ENCODE measurements at regions of chr2 and their contacts with region 1.

Region 1: DNA sequence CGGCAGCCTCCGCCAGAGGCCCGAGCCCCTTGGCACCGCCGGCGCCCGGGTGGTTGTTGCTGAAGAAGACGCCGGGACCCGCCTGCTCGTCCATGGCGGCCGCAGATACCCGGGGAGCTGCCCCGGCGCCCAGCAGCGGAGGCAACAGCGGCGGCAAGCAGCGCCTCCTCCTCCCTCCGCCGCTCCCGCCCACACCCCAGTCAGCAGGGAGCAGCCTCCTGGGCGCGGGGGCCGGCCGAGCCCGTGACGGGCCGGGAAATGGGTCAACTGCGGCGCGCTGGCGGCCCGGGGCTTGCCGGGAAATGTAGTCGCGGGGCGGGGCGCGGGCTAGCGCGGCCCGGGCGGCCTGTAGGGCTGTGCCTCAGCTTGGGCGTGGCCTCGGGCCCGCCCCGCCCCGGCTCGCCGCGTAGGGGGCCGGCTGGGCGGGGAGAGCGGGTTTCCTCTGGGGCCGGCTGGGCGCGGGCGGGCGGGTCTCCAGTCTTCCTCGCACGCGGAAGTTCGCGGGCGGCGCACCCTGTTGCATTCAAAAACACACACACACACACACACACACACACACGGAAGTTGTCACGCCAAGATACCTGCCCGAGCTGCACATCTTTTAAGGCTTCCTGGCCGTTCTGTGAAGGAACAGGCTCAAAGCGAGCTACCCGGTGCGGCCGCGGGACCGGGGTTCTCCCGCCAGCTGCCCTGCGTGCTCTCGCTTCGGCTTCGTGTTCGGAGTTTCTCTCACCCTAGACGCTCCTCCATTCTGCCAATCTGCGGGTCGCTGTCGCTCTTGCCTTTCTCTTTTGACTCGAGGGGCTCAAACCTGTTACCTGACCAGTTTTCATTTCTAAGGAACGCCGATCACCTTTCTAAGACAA is at the start of gene STRN:
- DNase-seq: peak; percentile 99
- ATAC-seq: peak; percentile 91
- H3K4me3 ChIP-seq: peak within 1 kb of the TSS; percentile 66 to 91 (median 79)
- H3K4me3 Mint-ChIP-seq: peak within 1 kb of the TSS; percentile 99
- H3K27ac ChIP-seq: peak within 1 kb of the TSS; percentile 72 to 89
- H3K27ac Mint-ChIP-seq: peak within 1 kb of the TSS; percentile 94
- H3K4me1 ChIP-seq: peaks cover 21 to 23% of the 10 kb centered on the region in 2 donors
- H3K4me1 Mint-ChIP-seq: peaks cover 33% of the 10 kb centered on the region
- H3K27me3 ChIP-seq: no peaks in the 10 kb centered on the region
- H3K27me3 Mint-ChIP-seq: no peaks in the 10 kb centered on the region
- CTCF ChIP-seq: no peak
- total RNA-seq, gene STRN: 38.6 and 42.8 TPM in 2 replicates

Region 2: GRCh38 chr2:36780231-36780839 is 186.3 kb before region 1 on chr2:
- CTCF ChIA-PET with region 1: no interaction called
- POLR2A ChIA-PET with region 1: no interaction called
- intact Hi-C with region 1: no loop called
- DNase-seq: peak; percentile 59
- ATAC-seq: no peak
- H3K4me3 ChIP-seq: no peak overlapping the region
- H3K4me3 Mint-ChIP-seq: no peak overlapping the region
- H3K27ac ChIP-seq: no peak overlapping the region
- H3K27ac Mint-ChIP-seq: no peak overlapping the region
- H3K4me1 ChIP-seq: peaks cover 0 to 3% of the 10 kb centered on the region in 2 donors
- H3K4me1 Mint-ChIP-seq: peaks cover 2% of the 10 kb centered on the region
- H3K27me3 ChIP-seq: peaks cover 0 to 2% (median 0%) of the 10 kb centered on the region in 4 experiments
- H3K27me3 Mint-ChIP-seq: peaks cover 15% of the 10 kb centered on the region
- CTCF ChIP-seq: peak; percentile 95

Region 3: GRCh38 chr2:37013315-37013641 is 46.7 kb after region 1 on chr2:
- CTCF ChIA-PET with region 1: no interaction called
- POLR2A ChIA-PET with region 1: interaction called, 7 read pairs
- intact Hi-C with region 1: loop called (anchors 1 kb)
- DNase-seq: no peak
- ATAC-seq: peak; percentile 9
- H3K4me3 ChIP-seq: no peak overlapping the region
- H3K4me3 Mint-ChIP-seq: no peak overlapping the region
- H3K27ac ChIP-seq: peak overlapping the region; percentile 43 to 86
- H3K27ac Mint-ChIP-seq: peak overlapping the region; percentile 78
- H3K4me1 ChIP-seq: peaks cover 36 to 41% of the 10 kb centered on the region in 2 donors
- H3K4me1 Mint-ChIP-seq: peaks cover 30% of the 10 kb centered on the region
- H3K27me3 ChIP-seq: no peaks in the 10 kb centered on the region
- H3K27me3 Mint-ChIP-seq: no peaks in the 10 kb centered on the region
- CTCF ChIP-seq: no peak

Region 4: DNA sequence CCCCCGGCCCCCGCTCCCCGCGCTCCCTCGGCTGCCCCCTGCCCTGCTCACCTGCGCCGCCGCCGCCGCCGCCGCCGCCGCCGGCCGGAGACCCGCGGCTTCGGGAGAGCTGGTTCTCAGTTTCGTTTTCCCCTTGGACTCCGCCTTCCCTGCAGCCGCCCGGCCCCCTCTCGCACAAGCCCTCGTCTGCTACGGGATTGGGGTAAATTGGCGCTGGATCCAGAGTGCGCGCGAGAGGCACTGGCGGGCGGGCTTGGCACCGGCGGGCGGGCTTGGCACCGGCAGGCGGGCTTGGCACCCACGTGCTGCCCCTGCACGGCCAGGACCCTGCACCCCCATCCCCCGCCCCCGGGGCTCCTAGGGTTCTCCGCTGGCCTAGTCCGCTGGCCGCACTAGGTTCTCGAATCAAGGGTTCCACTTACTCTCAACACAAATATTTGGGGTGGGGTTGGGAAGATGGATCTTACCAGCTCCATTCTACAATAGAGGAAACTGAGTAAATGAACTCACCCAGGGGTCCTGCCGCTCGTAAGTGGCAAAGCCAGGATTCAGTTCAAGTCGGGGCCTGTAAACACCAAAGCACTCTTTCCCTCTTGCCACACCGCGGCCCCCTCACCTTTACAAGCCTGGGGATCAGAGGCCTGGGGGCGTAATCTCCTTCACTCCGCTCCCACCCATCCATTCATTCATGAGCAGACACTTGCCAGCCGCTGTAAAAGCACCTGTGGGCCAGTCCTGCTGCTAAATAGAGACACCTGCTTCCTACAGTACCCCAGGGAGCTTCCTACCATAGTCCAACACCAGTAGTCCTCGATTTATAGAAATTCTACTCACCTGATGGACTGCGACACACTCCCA is 190.5 kb after region 1 on chr2 and contains the start of gene EIF2AK2:
- CTCF ChIA-PET with region 1: no interaction called
- POLR2A ChIA-PET with region 1: interaction called, 3 read pairs
- intact Hi-C with region 1: loop called (anchors 1 kb)
- DNase-seq: peak; percentile 86
- ATAC-seq: peak; percentile 92
- H3K4me3 ChIP-seq: peak within 1 kb of the TSS; percentile 78 to 93 (median 80)
- H3K4me3 Mint-ChIP-seq: peak within 1 kb of the TSS; percentile 96
- H3K27ac ChIP-seq: peak within 1 kb of the TSS; percentile 58 to 72
- H3K27ac Mint-ChIP-seq: peak within 1 kb of the TSS; percentile 93
- H3K4me1 ChIP-seq: peaks cover 26 to 30% of the 10 kb centered on the region in 2 donors
- H3K4me1 Mint-ChIP-seq: peaks cover 40% of the 10 kb centered on the region
- H3K27me3 ChIP-seq: no peaks in the 10 kb centered on the region
- H3K27me3 Mint-ChIP-seq: no peaks in the 10 kb centered on the region
- CTCF ChIP-seq: no peak
- total RNA-seq, gene EIF2AK2: 36.2 and 36.9 TPM in 2 replicates

Region 5: GRCh38 chr2:37231241-37232130 is 264.9 kb after region 1 on chr2 and contains the starts of genes CEBPZ and NDUFAF7:
- CTCF ChIA-PET with region 1: no interaction called
- POLR2A ChIA-PET with region 1: no interaction called
- intact Hi-C with region 1: loop called (anchors 5 kb)
- DNase-seq: peak; percentile 90
- ATAC-seq: peak; percentile 92
- H3K4me3 ChIP-seq: peak within 1 kb of the TSS; percentile 76 to 95 (median 91)
- H3K4me3 Mint-ChIP-seq: no peak within 1 kb of the TSS
- H3K27ac ChIP-seq: peak within 1 kb of the TSS; percentile 85 to 90
- H3K27ac Mint-ChIP-seq: no peak within 1 kb of the TSS
- H3K4me1 ChIP-seq: peaks cover 26 to 28% of the 10 kb centered on the region in 2 donors
- H3K4me1 Mint-ChIP-seq: peaks cover 18% of the 10 kb centered on the region
- H3K27me3 ChIP-seq: no peaks in the 10 kb centered on the region
- H3K27me3 Mint-ChIP-seq: no peaks in the 10 kb centered on the region
- CTCF ChIP-seq: no peak
- total RNA-seq, gene CEBPZ: 43.9 and 56.5 TPM in 2 replicates
- total RNA-seq, gene NDUFAF7: 35.4 and 42.0 TPM in 2 replicates

Region 6: GRCh38 chr2:37389989-37390765 is 423.6 kb after region 1 on chr2:
- CTCF ChIA-PET with region 1: no interaction called
- POLR2A ChIA-PET with region 1: no interaction called
- intact Hi-C with region 1: loop called (anchors 5 kb)
- DNase-seq: peak; percentile 91
- ATAC-seq: peak; percentile 93
- H3K4me3 ChIP-seq: peak overlapping the region in 1 of 5 experiments; percentile 40
- H3K4me3 Mint-ChIP-seq: peak overlapping the region; percentile 81
- H3K27ac ChIP-seq: peak overlapping the region; percentile 91 to 93
- H3K27ac Mint-ChIP-seq: no peak overlapping the region
- H3K4me1 ChIP-seq: peaks cover 37 to 38% of the 10 kb centered on the region in 2 donors
- H3K4me1 Mint-ChIP-seq: peaks cover 3% of the 10 kb centered on the region
- H3K27me3 ChIP-seq: no peaks in the 10 kb centered on the region
- H3K27me3 Mint-ChIP-seq: no peaks in the 10 kb centered on the region
- CTCF ChIP-seq: no peak

Region 7: GRCh38 chr2:37925063-37925897 is 958.7 kb after region 1 on chr2 and contains the start of gene RMDN2:
- CTCF ChIA-PET with region 1: no interaction called
- POLR2A ChIA-PET with region 1: no interaction called
- intact Hi-C with region 1: loop called (anchors 10 kb)
- DNase-seq: peak; percentile 92
- ATAC-seq: peak; percentile 85
- H3K4me3 ChIP-seq: peak within 1 kb of the TSS; percentile 61 to 86 (median 81)
- H3K4me3 Mint-ChIP-seq: peak within 1 kb of the TSS; percentile 96
- H3K27ac ChIP-seq: peak within 1 kb of the TSS; percentile 84
- H3K27ac Mint-ChIP-seq: peak within 1 kb of the TSS; percentile 96
- H3K4me1 ChIP-seq: peaks cover 13 to 15% of the 10 kb centered on the region in 2 donors
- H3K4me1 Mint-ChIP-seq: peaks cover 34% of the 10 kb centered on the region
- H3K27me3 ChIP-seq: no peaks in the 10 kb centered on the region
- H3K27me3 Mint-ChIP-seq: peaks cover 7% of the 10 kb centered on the region
- CTCF ChIP-seq: peak; percentile 40
- total RNA-seq, gene RMDN2: 6.4 and 6.6 TPM in 2 replicates

Measured in B cell (primary cell).